CD8-positive, alpha-beta memory T cell (primary cell): ENCODE measurements at regions of chr20 and their contacts with region 1.

Region 1: GRCh38 chr20:45771182-45771759 is 20.4 kb downstream of the WFDC3 start:
- DNase-seq: peak; percentile 64 to 81 (median 69)
- H3K4me3 ChIP-seq: no peak overlapping the region
- H3K4me3 Mint-ChIP-seq: no peak overlapping the region
- H3K27ac ChIP-seq: no peak overlapping the region
- H3K27ac Mint-ChIP-seq: peak overlapping the region in 2 of 8 donors; percentile 26 to 71
- H3K4me1 ChIP-seq: no peaks in the 10 kb centered on the region
- H3K4me1 Mint-ChIP-seq: peaks cover 3 to 4% (median 4%) of the 10 kb centered on the region in 3 donors
- H3K27me3 ChIP-seq: no peaks in the 10 kb centered on the region
- H3K27me3 Mint-ChIP-seq: peaks cover 14 to 20% of the 10 kb centered on the region in 2 donors

Region 2: GRCh38 chr20:45293041-45294002 is 477.9 kb before region 1 on chr20:
- CTCF ChIA-PET with region 1: interaction called, 13 read pairs
- POLR2A ChIA-PET with region 1: no interaction called
- DNase-seq: peak; percentile 66 to 80 (median 68)
- H3K4me3 ChIP-seq: peak overlapping the region; percentile 43
- H3K4me3 Mint-ChIP-seq: peak overlapping the region; percentile 65 to 86 (median 77)
- H3K27ac ChIP-seq: no peak overlapping the region
- H3K27ac Mint-ChIP-seq: peak overlapping the region in 2 of 8 donors; percentile 22 to 35
- H3K4me1 ChIP-seq: peaks cover 5% of the 10 kb centered on the region
- H3K4me1 Mint-ChIP-seq: peaks cover 8 to 23% (median 16%) of the 10 kb centered on the region in 3 donors
- H3K27me3 ChIP-seq: peaks cover 9% of the 10 kb centered on the region
- H3K27me3 Mint-ChIP-seq: peaks cover 42 to 45% of the 10 kb centered on the region in 2 donors

Region 3: DNA sequence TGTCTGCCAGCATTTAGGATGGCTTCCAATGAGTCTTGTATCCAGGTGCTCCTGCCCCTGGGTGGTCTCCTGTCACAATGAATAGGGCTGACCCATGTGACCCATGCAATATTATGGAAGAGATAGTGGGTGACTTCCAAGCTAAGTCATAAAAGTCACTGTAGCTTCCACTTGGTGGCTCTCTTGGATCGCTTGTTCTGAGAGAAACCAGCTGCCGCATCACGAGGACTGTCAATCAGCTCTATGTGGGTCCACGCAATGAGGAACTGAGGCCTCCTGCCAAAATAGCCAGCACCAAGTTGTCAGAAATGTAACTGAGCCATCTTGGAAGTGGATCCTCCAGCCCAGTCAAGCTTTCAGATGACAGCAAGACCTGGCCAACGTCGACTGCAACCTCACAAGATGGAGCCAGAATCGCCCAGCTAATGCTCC is 448.3 kb before region 1 on chr20:
- CTCF ChIA-PET with region 1: interaction called, 81 read pairs
- POLR2A ChIA-PET with region 1: no interaction called
- DNase-seq: no peak
- H3K4me3 ChIP-seq: no peak overlapping the region
- H3K4me3 Mint-ChIP-seq: no peak overlapping the region
- H3K27ac ChIP-seq: no peak overlapping the region
- H3K27ac Mint-ChIP-seq: peak overlapping the region in 1 of 8 donors; percentile 89
- H3K4me1 ChIP-seq: peaks cover 26% of the 10 kb centered on the region
- H3K4me1 Mint-ChIP-seq: peaks cover 20 to 25% (median 22%) of the 10 kb centered on the region in 3 donors
- H3K27me3 ChIP-seq: no peaks in the 10 kb centered on the region
- H3K27me3 Mint-ChIP-seq: no peaks in the 10 kb centered on the region

Region 4: DNA sequence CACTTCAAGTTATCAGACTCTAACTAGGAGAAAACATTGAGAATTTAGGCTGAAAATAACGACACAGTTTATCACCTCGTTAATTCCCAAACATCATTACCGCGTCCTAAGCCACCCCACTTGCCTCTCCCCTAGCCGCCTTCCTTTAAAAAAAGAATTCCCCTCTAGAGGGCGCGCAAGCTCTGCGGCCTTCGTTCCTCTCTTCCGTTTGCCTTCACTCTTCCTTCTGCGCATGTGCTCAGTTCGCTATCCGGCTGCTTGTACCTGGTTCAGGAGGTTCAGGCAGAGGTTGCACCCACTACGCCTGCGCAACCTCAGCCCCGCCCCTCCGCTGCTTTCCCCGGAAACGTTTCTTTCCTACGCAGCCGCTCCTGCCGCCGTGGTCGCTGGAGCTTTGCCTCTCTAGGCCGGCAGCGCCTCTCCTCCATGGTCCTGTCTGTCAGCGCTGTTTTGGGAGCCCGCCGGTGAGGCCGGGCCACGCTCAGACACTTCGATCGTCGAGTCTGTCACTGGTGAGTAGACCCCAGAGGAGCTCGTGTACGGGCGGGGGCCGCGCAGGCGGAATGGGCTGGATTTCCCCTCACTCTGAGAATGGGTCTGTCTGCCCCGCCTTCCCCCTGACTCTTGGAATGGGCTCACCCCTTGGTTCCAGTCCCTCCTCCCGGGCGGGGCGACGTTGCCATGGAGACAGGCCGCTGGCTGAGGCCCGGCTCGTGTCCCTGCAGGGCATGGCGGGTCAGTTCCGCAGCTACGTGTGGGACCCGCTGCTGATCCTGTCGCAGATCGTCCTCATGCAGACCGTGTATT is 408.3 kb before region 1 on chr20 and contains the start of gene SYS1:
- CTCF ChIA-PET with region 1: interaction called, 35 read pairs
- POLR2A ChIA-PET with region 1: no interaction called
- DNase-seq: peak; percentile 98 to 99 (median 99)
- H3K4me3 ChIP-seq: peak within 1 kb of the TSS; percentile 92
- H3K4me3 Mint-ChIP-seq: peak within 1 kb of the TSS; percentile 90 to 99 (median 98)
- H3K27ac ChIP-seq: peak within 1 kb of the TSS; percentile 96
- H3K27ac Mint-ChIP-seq: peak within 1 kb of the TSS; percentile 95 to 100 (median 99)
- H3K4me1 ChIP-seq: peaks cover 42% of the 10 kb centered on the region
- H3K4me1 Mint-ChIP-seq: peaks cover 44 to 54% (median 48%) of the 10 kb centered on the region in 3 donors
- H3K27me3 ChIP-seq: no peaks in the 10 kb centered on the region
- H3K27me3 Mint-ChIP-seq: peaks cover 0 to 1% of the 10 kb centered on the region in 2 donors
- total RNA-seq, gene SYS1: 48.3 to 54.0 TPM

Region 5: GRCh38 chr20:45701104-45701503 is 70.2 kb before region 1 on chr20:
- CTCF ChIA-PET with region 1: no interaction called
- POLR2A ChIA-PET with region 1: no interaction called
- DNase-seq: no peak
- H3K4me3 ChIP-seq: no peak overlapping the region
- H3K4me3 Mint-ChIP-seq: no peak overlapping the region
- H3K27ac ChIP-seq: no peak overlapping the region
- H3K27ac Mint-ChIP-seq: no peak overlapping the region
- H3K4me1 ChIP-seq: no peaks in the 10 kb centered on the region
- H3K4me1 Mint-ChIP-seq: no peaks in the 10 kb centered on the region
- H3K27me3 ChIP-seq: no peaks in the 10 kb centered on the region
- H3K27me3 Mint-ChIP-seq: peaks cover 7 to 29% of the 10 kb centered on the region in 2 donors

Region 6: GRCh38 chr20:45792332-45792686 is 21.0 kb after region 1 on chr20:
- CTCF ChIA-PET with region 1: interaction called, 13 read pairs
- POLR2A ChIA-PET with region 1: no interaction called
- DNase-seq: no peak
- H3K4me3 ChIP-seq: peak overlapping the region; percentile 76
- H3K4me3 Mint-ChIP-seq: peak overlapping the region; percentile 87 to 95 (median 91)
- H3K27ac ChIP-seq: peak overlapping the region; percentile 92
- H3K27ac Mint-ChIP-seq: peak overlapping the region; percentile 88 to 99 (median 95)
- H3K4me1 ChIP-seq: peaks cover 10% of the 10 kb centered on the region
- H3K4me1 Mint-ChIP-seq: peaks cover 13 to 23% (median 13%) of the 10 kb centered on the region in 3 donors
- H3K27me3 ChIP-seq: no peaks in the 10 kb centered on the region
- H3K27me3 Mint-ChIP-seq: no peaks in the 10 kb centered on the region

Region 7: GRCh38 chr20:45893831-45894230 is 122.6 kb after region 1 on chr20:
- CTCF ChIA-PET with region 1: no interaction called
- POLR2A ChIA-PET with region 1: no interaction called
- DNase-seq: no peak
- H3K4me3 ChIP-seq: no peak overlapping the region
- H3K4me3 Mint-ChIP-seq: peak overlapping the region in 3 of 7 donors; percentile 50 to 92 (median 81)
- H3K27ac ChIP-seq: no peak overlapping the region
- H3K27ac Mint-ChIP-seq: peak overlapping the region in 5 of 8 donors; percentile 47 to 96 (median 77)
- H3K4me1 ChIP-seq: peaks cover 23% of the 10 kb centered on the region
- H3K4me1 Mint-ChIP-seq: peaks cover 28 to 42% (median 35%) of the 10 kb centered on the region in 3 donors
- H3K27me3 ChIP-seq: no peaks in the 10 kb centered on the region
- H3K27me3 Mint-ChIP-seq: no peaks in the 10 kb centered on the region